AG04450 (cell line): ENCODE measurements at regions of chrX and their contacts with region 1.

Region 1: GRCh38 chrX:102899940-102900916 is 36.8 kb upstream of the RAB40AL start:
- DNase-seq: peak; percentile 26
- H3K4me3 ChIP-seq: no peak overlapping the region
- H3K27ac ChIP-seq: no peak overlapping the region
- H3K27me3 ChIP-seq: no peaks in the 10 kb centered on the region
- CTCF ChIP-seq: peak; percentile 64

Region 2: DNA sequence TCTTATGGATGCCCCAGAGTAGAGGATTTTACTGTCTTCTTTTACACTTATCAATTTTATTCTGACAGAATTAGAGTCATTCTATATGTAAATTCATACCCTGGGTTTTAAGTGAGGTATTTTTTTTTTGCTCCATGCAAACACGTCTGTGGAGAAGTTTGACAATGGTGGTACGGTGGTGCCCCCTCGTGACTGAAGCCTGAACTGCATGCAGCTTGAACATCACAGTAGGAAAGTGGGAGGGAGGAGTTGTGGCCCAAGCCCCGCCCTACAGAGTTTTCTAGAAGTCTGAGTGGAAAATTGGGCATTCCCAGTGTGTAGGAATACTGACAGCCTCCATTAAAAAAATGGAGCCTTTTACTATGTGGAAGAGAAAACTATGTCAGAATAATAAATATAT is 36.5 kb before region 1 on chrX:
- CTCF ChIA-PET with region 1: interaction called, 10 read pairs
- POLR2A ChIA-PET with region 1: no interaction called
- DNase-seq: peak; percentile 47
- H3K4me3 ChIP-seq: no peak overlapping the region
- H3K27ac ChIP-seq: no peak overlapping the region
- H3K27me3 ChIP-seq: no peaks in the 10 kb centered on the region
- CTCF ChIP-seq: peak; percentile 77

Region 3: DNA sequence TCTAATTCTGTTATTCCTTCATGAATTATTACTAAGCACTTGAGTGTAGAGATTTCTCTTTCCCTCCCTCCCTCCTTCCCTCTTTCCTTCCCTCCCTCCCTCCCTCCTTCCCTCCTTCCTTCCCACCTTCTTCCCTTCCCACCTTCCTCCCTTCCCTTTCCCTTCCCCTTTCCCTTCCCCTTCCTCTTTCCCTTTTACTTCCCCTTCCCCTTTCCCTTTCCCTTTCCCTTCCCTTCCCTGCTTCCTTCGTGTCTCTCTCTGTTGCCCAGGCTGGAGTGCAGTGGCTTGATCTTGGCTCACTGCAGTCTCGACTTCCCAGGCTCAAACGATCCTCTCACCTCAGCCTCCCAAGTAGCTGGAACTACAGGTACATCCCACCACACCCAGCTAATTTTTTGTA is 12.5 kb before region 1 on chrX:
- CTCF ChIA-PET with region 1: interaction called, 11 read pairs
- POLR2A ChIA-PET with region 1: no interaction called
- DNase-seq: no peak
- H3K4me3 ChIP-seq: no peak overlapping the region
- H3K27ac ChIP-seq: no peak overlapping the region
- H3K27me3 ChIP-seq: no peaks in the 10 kb centered on the region
- CTCF ChIP-seq: no peak